B cell (primary cell): ENCODE measurements at regions of chr6 and their contacts with region 1.

Region 1: GRCh38 chr6:32700391-32701040 is 34.1 kb upstream of the HLA-DQB1 start:
- DNase-seq: peak; percentile 79
- ATAC-seq: peak; percentile 71
- H3K4me3 ChIP-seq: peak overlapping the region in 3 of 5 experiments; percentile 13 to 38 (median 27)
- H3K4me3 Mint-ChIP-seq: peak overlapping the region; percentile 84
- H3K27ac ChIP-seq: no peak overlapping the region
- H3K27ac Mint-ChIP-seq: peak overlapping the region; percentile 85
- H3K4me1 ChIP-seq: peaks cover 0 to 4% of the 10 kb centered on the region in 2 donors
- H3K4me1 Mint-ChIP-seq: peaks cover 18% of the 10 kb centered on the region
- H3K27me3 ChIP-seq: peaks cover 0 to 6% (median 4%) of the 10 kb centered on the region in 4 experiments
- H3K27me3 Mint-ChIP-seq: peaks cover 3% of the 10 kb centered on the region
- CTCF ChIP-seq: peak; percentile 64

Region 2: GRCh38 chr6:32244946-32245398 is 455.5 kb before region 1 on chr6:
- CTCF ChIA-PET with region 1: interaction called, 13 read pairs
- POLR2A ChIA-PET with region 1: no interaction called
- intact Hi-C with region 1: loop called (anchors 5 kb)
- DNase-seq: peak; percentile 87
- ATAC-seq: peak; percentile 93
- H3K4me3 ChIP-seq: peak overlapping the region in 3 of 5 experiments; percentile 8 to 40 (median 24)
- H3K4me3 Mint-ChIP-seq: peak overlapping the region; percentile 76
- H3K27ac ChIP-seq: no peak overlapping the region
- H3K27ac Mint-ChIP-seq: peak overlapping the region; percentile 33
- H3K4me1 ChIP-seq: peaks cover 8 to 16% of the 10 kb centered on the region in 2 donors
- H3K4me1 Mint-ChIP-seq: peaks cover 15% of the 10 kb centered on the region
- H3K27me3 ChIP-seq: no peaks in the 10 kb centered on the region
- H3K27me3 Mint-ChIP-seq: no peaks in the 10 kb centered on the region
- CTCF ChIP-seq: peak; percentile 90

Region 3: GRCh38 chr6:32402812-32403211 is 297.7 kb before region 1 on chr6:
- CTCF ChIA-PET with region 1: interaction called, 10 read pairs
- POLR2A ChIA-PET with region 1: no interaction called
- intact Hi-C with region 1: no loop called
- DNase-seq: no peak
- ATAC-seq: no peak
- H3K4me3 ChIP-seq: no peak overlapping the region
- H3K4me3 Mint-ChIP-seq: no peak overlapping the region
- H3K27ac ChIP-seq: no peak overlapping the region
- H3K27ac Mint-ChIP-seq: no peak overlapping the region
- H3K4me1 ChIP-seq: no peaks in the 10 kb centered on the region
- H3K4me1 Mint-ChIP-seq: peaks cover 8% of the 10 kb centered on the region
- H3K27me3 ChIP-seq: peaks cover 0 to 9% (median 0%) of the 10 kb centered on the region in 4 experiments
- H3K27me3 Mint-ChIP-seq: peaks cover 6% of the 10 kb centered on the region
- CTCF ChIP-seq: no peak

Region 4: GRCh38 chr6:32424589-32425300 is 275.8 kb before region 1 on chr6:
- CTCF ChIA-PET with region 1: interaction called, 131 read pairs
- POLR2A ChIA-PET with region 1: no interaction called
- intact Hi-C with region 1: no loop called
- DNase-seq: no peak
- ATAC-seq: no peak
- H3K4me3 ChIP-seq: no peak overlapping the region
- H3K4me3 Mint-ChIP-seq: no peak overlapping the region
- H3K27ac ChIP-seq: no peak overlapping the region
- H3K27ac Mint-ChIP-seq: no peak overlapping the region
- H3K4me1 ChIP-seq: no peaks in the 10 kb centered on the region
- H3K4me1 Mint-ChIP-seq: no peaks in the 10 kb centered on the region
- H3K27me3 ChIP-seq: peaks cover 0 to 2% (median under 1%) of the 10 kb centered on the region in 4 experiments
- H3K27me3 Mint-ChIP-seq: peaks cover 13% of the 10 kb centered on the region
- CTCF ChIP-seq: no peak

Region 5: GRCh38 chr6:32432050-32432450 is 268.5 kb before region 1 on chr6:
- CTCF ChIA-PET with region 1: interaction called, 131 read pairs
- POLR2A ChIA-PET with region 1: interaction called, 4 read pairs
- intact Hi-C with region 1: loop called (anchors 1 kb)
- DNase-seq: peak; percentile 78
- ATAC-seq: peak; percentile 38
- H3K4me3 ChIP-seq: no peak overlapping the region
- H3K4me3 Mint-ChIP-seq: no peak overlapping the region
- H3K27ac ChIP-seq: no peak overlapping the region
- H3K27ac Mint-ChIP-seq: peak overlapping the region; percentile 63
- H3K4me1 ChIP-seq: peaks cover 21 to 27% of the 10 kb centered on the region in 2 donors
- H3K4me1 Mint-ChIP-seq: peaks cover 32% of the 10 kb centered on the region
- H3K27me3 ChIP-seq: no peaks in the 10 kb centered on the region
- H3K27me3 Mint-ChIP-seq: no peaks in the 10 kb centered on the region
- CTCF ChIP-seq: peak; percentile 83

Region 6: GRCh38 chr6:32459549-32460424 is 240.7 kb before region 1 on chr6:
- CTCF ChIA-PET with region 1: interaction called, 14 read pairs
- POLR2A ChIA-PET with region 1: no interaction called
- intact Hi-C with region 1: no loop called
- DNase-seq: no peak
- ATAC-seq: no peak
- H3K4me3 ChIP-seq: peak overlapping the region in 4 of 5 experiments; percentile 29 to 61 (median 45)
- H3K4me3 Mint-ChIP-seq: peak overlapping the region; percentile 81
- H3K27ac ChIP-seq: no peak overlapping the region
- H3K27ac Mint-ChIP-seq: peak overlapping the region; percentile 64
- H3K4me1 ChIP-seq: peaks cover 0 to 10% of the 10 kb centered on the region in 2 donors
- H3K4me1 Mint-ChIP-seq: peaks cover 20% of the 10 kb centered on the region
- H3K27me3 ChIP-seq: no peaks in the 10 kb centered on the region
- H3K27me3 Mint-ChIP-seq: no peaks in the 10 kb centered on the region
- CTCF ChIP-seq: no peak

Region 7: DNA sequence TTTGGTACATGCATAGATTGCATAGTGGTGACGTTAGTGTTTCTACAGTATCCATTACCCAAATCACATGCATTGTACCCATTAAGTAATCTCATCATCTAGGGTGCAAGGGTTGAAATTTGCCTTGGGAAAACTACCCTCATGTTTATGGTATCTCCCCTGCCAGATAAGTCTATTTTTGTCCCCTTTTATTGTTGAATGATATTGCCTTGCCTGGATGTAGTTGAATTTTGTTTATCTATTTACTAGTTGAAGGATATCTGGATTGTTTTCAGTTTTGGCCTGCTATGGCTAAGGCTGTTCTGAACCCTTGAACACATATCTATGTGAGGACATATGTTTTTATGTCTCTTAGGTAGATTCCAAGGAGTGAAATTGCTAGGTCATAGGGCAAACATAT is 124.3 kb before region 1 on chr6:
- CTCF ChIA-PET with region 1: no interaction called
- POLR2A ChIA-PET with region 1: no interaction called
- intact Hi-C with region 1: no loop called
- DNase-seq: no peak
- ATAC-seq: no peak
- H3K4me3 ChIP-seq: no peak overlapping the region
- H3K4me3 Mint-ChIP-seq: no peak overlapping the region
- H3K27ac ChIP-seq: no peak overlapping the region
- H3K27ac Mint-ChIP-seq: peak overlapping the region; percentile 81
- H3K4me1 ChIP-seq: peaks cover 0 to 5% of the 10 kb centered on the region in 2 donors
- H3K4me1 Mint-ChIP-seq: peaks cover 23% of the 10 kb centered on the region
- H3K27me3 ChIP-seq: no peaks in the 10 kb centered on the region
- H3K27me3 Mint-ChIP-seq: no peaks in the 10 kb centered on the region
- CTCF ChIP-seq: no peak

Region 8: GRCh38 chr6:32589598-32590449 is 110.7 kb before region 1 on chr6 and contains the start of gene HLA-DRB1:
- CTCF ChIA-PET with region 1: no interaction called
- POLR2A ChIA-PET with region 1: no interaction called
- intact Hi-C with region 1: no loop called
- DNase-seq: peak; percentile 87
- ATAC-seq: peak; percentile 94
- H3K4me3 ChIP-seq: peak within 1 kb of the TSS in 4 of 5 experiments; percentile 52 to 72 (median 62)
- H3K4me3 Mint-ChIP-seq: peak within 1 kb of the TSS; percentile 97
- H3K27ac ChIP-seq: peak within 1 kb of the TSS; percentile 74 to 86
- H3K27ac Mint-ChIP-seq: peak within 1 kb of the TSS; percentile 100
- H3K4me1 ChIP-seq: peaks cover 0 to 13% of the 10 kb centered on the region in 2 donors
- H3K4me1 Mint-ChIP-seq: peaks cover 63% of the 10 kb centered on the region
- H3K27me3 ChIP-seq: no peaks in the 10 kb centered on the region
- H3K27me3 Mint-ChIP-seq: no peaks in the 10 kb centered on the region
- CTCF ChIP-seq: no peak
- total RNA-seq, gene HLA-DRB1: 559 and 584 TPM in 2 replicates

Region 9: GRCh38 chr6:32716399-32716798 is 15.9 kb after region 1 on chr6:
- CTCF ChIA-PET with region 1: interaction called, 14 read pairs
- POLR2A ChIA-PET with region 1: no interaction called
- intact Hi-C with region 1: no loop called
- DNase-seq: no peak
- ATAC-seq: no peak
- H3K4me3 ChIP-seq: no peak overlapping the region
- H3K4me3 Mint-ChIP-seq: no peak overlapping the region
- H3K27ac ChIP-seq: no peak overlapping the region
- H3K27ac Mint-ChIP-seq: no peak overlapping the region
- H3K4me1 ChIP-seq: no peaks in the 10 kb centered on the region
- H3K4me1 Mint-ChIP-seq: no peaks in the 10 kb centered on the region
- H3K27me3 ChIP-seq: no peaks in the 10 kb centered on the region
- H3K27me3 Mint-ChIP-seq: peaks cover 7% of the 10 kb centered on the region
- CTCF ChIP-seq: no peak

Region 10: GRCh38 chr6:32741031-32741960 is 40.8 kb after region 1 on chr6 and contains the start of gene HLA-DQA2:
- CTCF ChIA-PET with region 1: no interaction called
- POLR2A ChIA-PET with region 1: no interaction called
- intact Hi-C with region 1: no loop called
- DNase-seq: peak; percentile 70
- ATAC-seq: peak; percentile 99
- H3K4me3 ChIP-seq: peak within 1 kb of the TSS in 1 of 5 experiments; percentile 34
- H3K4me3 Mint-ChIP-seq: peak within 1 kb of the TSS; percentile 86
- H3K27ac ChIP-seq: peak within 1 kb of the TSS in 1 of 2 donors; percentile 68
- H3K27ac Mint-ChIP-seq: peak within 1 kb of the TSS; percentile 89
- H3K4me1 ChIP-seq: peaks cover 0 to 2% of the 10 kb centered on the region in 2 donors
- H3K4me1 Mint-ChIP-seq: peaks cover 7% of the 10 kb centered on the region
- H3K27me3 ChIP-seq: peaks cover 0 to 7% (median 3%) of the 10 kb centered on the region in 4 experiments
- H3K27me3 Mint-ChIP-seq: peaks cover 30% of the 10 kb centered on the region
- CTCF ChIP-seq: no peak
- total RNA-seq, gene HLA-DQA2: 171 and 173 TPM in 2 replicates